ENCODE measurements at regions of chr11 and their contacts with region 1.

Region 1: GRCh38 chr11:95150946-95151684 is 61.5 kb downstream of the ENDOD1 start:
- DNase-seq: peak; percentile 95

Region 2: GRCh38 chr11:94926698-94927237 is 224.3 kb before region 1 on chr11:
- intact Hi-C with region 1: no loop called
- DNase-seq: peak; percentile 89

Region 3: DNA sequence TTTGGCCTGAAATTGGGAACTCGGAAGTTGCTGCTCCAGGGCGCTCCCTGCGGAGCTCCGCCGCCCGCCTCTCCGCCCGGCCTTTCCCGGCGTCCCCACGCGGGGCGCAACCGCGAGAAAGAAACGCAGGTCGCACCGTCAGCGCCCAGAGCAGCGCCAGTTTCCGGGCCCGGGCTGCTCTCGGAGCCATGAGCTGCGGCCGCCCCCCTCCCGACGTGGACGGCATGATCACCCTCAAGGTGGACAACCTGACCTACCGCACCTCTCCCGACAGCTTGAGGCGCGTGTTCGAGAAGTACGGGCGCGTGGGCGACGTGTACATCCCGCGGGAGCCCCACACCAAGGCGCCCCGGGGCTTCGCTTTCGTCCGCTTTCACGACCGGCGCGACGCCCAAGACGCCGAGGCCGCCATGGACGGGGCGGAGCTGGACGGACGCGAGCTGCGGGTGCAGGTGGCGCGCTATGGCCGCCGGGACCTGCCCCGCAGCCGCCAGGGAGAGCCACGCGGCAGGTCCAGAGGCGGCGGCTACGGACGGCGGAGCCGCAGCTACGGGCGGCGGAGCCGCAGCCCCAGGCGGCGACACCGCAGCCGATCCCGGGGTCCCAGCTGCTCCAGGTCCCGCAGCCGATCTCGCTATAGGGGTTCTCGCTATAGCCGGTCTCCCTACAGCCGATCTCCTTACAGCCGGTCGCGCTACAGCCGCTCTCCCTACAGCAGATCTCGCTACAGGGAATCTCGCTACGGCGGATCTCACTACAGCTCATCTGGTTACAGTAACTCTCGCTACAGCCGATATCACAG is 83.9 kb before region 1 on chr11:
- intact Hi-C with region 1: loop called (anchors 1 kb)
- DNase-seq: peak; percentile 90

Region 4: GRCh38 chr11:95108159-95108611 is 42.9 kb before region 1 on chr11:
- intact Hi-C with region 1: loop called (anchors 2 kb)
- DNase-seq: no peak

Region 5: GRCh38 chr11:95212609-95213008 is 61.5 kb after region 1 on chr11:
- intact Hi-C with region 1: no loop called
- DNase-seq: no peak

Region 6: GRCh38 chr11:95222817-95223216 is 71.7 kb after region 1 on chr11:
- intact Hi-C with region 1: no loop called
- DNase-seq: no peak

Region 7: GRCh38 chr11:95705485-95706124 is 554.5 kb after region 1 on chr11:
- intact Hi-C with region 1: loop called (anchors 2 kb)
- DNase-seq: peak; percentile 90